ENCODE measurements at regions of chr1 and their contacts with region 1.

Region 1: GRCh38 chr1:27300341-27301051 is 21.5 kb upstream of the TMEM222 start:
- H3K4me3 ChIP-seq: no peak overlapping the region
- H3K27ac ChIP-seq: no peak overlapping the region
- H3K4me1 ChIP-seq: no peaks in the 10 kb centered on the region
- CTCF ChIP-seq: peak; percentile 92

Region 2: DNA sequence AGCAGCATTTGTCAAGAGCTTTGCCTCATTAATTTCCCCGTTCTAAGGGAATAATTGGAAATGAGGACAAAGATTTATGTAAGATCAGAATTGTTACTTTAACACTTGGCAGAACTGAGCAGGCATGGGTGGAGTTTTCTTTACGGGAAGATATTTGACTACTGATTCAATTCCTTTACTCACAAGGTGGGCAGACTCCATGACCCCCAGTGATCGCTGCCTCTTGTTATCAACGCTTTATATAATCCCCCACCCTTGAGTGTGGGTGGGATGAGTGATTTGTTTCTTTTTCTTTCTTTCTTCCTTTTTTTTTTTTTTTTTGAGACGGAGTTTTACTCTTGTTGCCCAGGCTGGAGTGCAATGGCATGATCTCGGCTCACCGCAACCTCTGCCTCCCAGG is 222.5 kb before region 1 on chr1:
- CTCF ChIA-PET with region 1: interaction called, 11 read pairs
- POLR2A ChIA-PET with region 1: no interaction called
- H3K4me3 ChIP-seq: no peak overlapping the region
- H3K27ac ChIP-seq: no peak overlapping the region
- H3K4me1 ChIP-seq: no peaks in the 10 kb centered on the region
- CTCF ChIP-seq: no peak

Region 3: GRCh38 chr1:27284425-27285273 is 15.8 kb before region 1 on chr1:
- CTCF ChIA-PET with region 1: interaction called, 141 read pairs
- POLR2A ChIA-PET with region 1: no interaction called
- H3K4me3 ChIP-seq: no peak overlapping the region
- H3K27ac ChIP-seq: no peak overlapping the region
- H3K4me1 ChIP-seq: no peaks in the 10 kb centered on the region
- CTCF ChIP-seq: peak; percentile 49

Region 4: GRCh38 chr1:27332536-27333281 is 32.2 kb after region 1 on chr1:
- CTCF ChIA-PET with region 1: interaction called, 31 read pairs
- POLR2A ChIA-PET with region 1: no interaction called
- H3K4me3 ChIP-seq: no peak overlapping the region
- H3K27ac ChIP-seq: no peak overlapping the region
- H3K4me1 ChIP-seq: no peaks in the 10 kb centered on the region
- CTCF ChIP-seq: peak; percentile 79

Region 5: GRCh38 chr1:27365372-27366112 is 65.0 kb after region 1 on chr1:
- CTCF ChIA-PET with region 1: interaction called, 29 read pairs
- POLR2A ChIA-PET with region 1: interaction called, 4 read pairs
- H3K4me3 ChIP-seq: peak overlapping the region; percentile 60
- H3K27ac ChIP-seq: peak overlapping the region; percentile 78
- H3K4me1 ChIP-seq: peaks cover 2% of the 10 kb centered on the region; the same call in 1 of the 2 replicates
- CTCF ChIP-seq: no peak

Region 6: DNA sequence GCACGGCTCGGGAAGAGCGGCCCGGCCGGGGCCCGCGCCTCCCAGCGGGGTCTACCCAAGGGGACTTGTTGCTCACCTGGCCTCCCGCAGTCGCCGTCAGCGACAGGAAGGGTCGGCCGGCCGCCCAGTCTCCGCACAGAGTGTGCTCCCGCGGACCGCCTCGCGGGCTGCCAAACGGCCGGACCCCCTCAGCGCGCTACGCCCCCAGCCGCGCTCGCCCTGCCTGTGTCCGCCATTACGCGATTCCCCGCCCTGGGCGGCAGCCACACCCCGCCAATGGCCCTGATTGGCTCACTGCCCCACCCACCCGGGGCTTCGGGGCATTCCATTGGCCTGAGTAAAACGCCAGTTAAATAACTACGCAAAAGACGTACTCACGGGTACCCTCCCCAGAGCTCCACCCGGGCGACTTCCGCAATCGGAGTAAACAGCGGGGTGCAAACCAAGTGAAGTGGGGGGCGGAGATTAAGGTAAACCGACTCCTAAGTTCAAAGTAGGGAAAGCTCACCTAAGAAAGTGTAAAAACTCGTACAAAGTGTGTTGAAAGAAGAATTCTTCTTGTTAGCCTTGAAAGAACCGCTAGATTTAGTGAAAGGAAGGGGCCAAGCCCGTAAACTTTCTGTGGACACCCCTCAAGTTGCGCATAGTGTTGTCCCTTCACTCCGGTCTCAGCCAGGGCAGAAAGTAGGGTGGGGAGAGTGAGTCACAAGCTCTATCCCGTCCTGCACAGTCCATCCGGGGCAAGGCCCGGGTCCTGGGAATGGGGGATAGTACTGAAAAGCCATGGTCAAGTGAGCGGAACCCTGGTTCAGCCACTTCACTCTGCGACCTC is 189.6 kb after region 1 on chr1 and contains the start of gene WASF2:
- CTCF ChIA-PET with region 1: no interaction called
- POLR2A ChIA-PET with region 1: no interaction called
- H3K4me3 ChIP-seq: peak within 1 kb of the TSS; percentile 86
- H3K27ac ChIP-seq: peak within 1 kb of the TSS; percentile 81
- H3K4me1 ChIP-seq: peaks cover 3% of the 10 kb centered on the region; the same call in 1 of the 2 replicates
- CTCF ChIP-seq: peak; percentile 54; the same call in 1 of the 2 replicates